ENCODE measurements at regions of chr9 and their contacts with region 1.

Region 1: DNA sequence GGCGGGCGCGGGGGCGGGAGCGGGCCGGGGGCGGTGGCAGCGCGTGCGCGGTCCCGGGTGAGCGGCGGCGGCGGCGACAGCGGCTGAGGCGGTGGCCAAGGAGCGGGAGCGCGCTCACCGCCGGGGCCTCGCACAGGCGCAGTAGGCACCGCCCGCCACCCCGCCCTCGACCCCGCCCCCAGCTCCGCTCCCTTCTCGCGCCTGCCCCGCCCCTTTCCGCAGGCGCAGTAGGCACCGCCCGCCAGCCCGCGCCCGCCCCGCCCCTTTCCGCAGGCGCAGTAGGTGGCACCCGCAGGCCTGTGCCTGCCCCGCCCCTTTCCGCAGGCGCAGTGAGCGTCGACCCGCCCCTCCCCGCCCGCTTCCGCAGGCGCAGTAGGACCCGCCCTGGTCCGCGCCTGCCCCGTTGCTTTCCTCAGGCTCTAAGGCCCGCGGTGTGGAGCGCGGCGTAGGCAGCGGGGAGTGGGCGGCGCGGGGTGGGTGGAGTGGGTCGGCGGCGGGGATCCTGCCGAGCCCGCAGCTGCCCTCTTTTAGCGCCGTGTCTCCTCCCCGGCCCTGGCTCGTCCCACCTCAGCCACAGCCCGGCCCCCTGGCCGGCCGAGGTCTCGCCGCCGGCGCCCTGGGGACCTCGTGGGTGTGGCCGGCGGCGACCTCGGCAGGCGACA is at the start of gene CAMSAP1:
- DNase-seq: peak; percentile 92
- H3K4me3 Mint-ChIP-seq: peak within 1 kb of the TSS; percentile 83
- H3K27ac Mint-ChIP-seq: peak within 1 kb of the TSS; percentile 67
- H3K4me1 Mint-ChIP-seq: peaks cover 39% of the 10 kb centered on the region
- H3K27me3 Mint-ChIP-seq: no peaks in the 10 kb centered on the region
- CTCF ChIP-seq: no peak
- total RNA-seq, gene CAMSAP1: 31.0 and 39.5 TPM in 2 replicates

Region 2: GRCh38 chr9:135757356-135757755 is 150.2 kb before region 1 on chr9:
- CTCF ChIA-PET with region 1: no interaction called
- POLR2A ChIA-PET with region 1: no interaction called
- intact Hi-C with region 1: no loop called
- DNase-seq: no peak
- H3K4me3 Mint-ChIP-seq: no peak overlapping the region
- H3K27ac Mint-ChIP-seq: no peak overlapping the region
- H3K4me1 Mint-ChIP-seq: no peaks in the 10 kb centered on the region
- H3K27me3 Mint-ChIP-seq: peaks cover 29% of the 10 kb centered on the region
- CTCF ChIP-seq: no peak

Region 3: GRCh38 chr9:135864447-135865049 is 43.0 kb before region 1 on chr9:
- CTCF ChIA-PET with region 1: interaction called, 4 read pairs
- POLR2A ChIA-PET with region 1: interaction called, 3 read pairs
- intact Hi-C with region 1: loop called (anchors 1 kb)
- DNase-seq: peak; percentile 65
- H3K4me3 Mint-ChIP-seq: no peak overlapping the region
- H3K27ac Mint-ChIP-seq: no peak overlapping the region
- H3K4me1 Mint-ChIP-seq: no peaks in the 10 kb centered on the region
- H3K27me3 Mint-ChIP-seq: no peaks in the 10 kb centered on the region
- CTCF ChIP-seq: peak; percentile 66

Region 4: DNA sequence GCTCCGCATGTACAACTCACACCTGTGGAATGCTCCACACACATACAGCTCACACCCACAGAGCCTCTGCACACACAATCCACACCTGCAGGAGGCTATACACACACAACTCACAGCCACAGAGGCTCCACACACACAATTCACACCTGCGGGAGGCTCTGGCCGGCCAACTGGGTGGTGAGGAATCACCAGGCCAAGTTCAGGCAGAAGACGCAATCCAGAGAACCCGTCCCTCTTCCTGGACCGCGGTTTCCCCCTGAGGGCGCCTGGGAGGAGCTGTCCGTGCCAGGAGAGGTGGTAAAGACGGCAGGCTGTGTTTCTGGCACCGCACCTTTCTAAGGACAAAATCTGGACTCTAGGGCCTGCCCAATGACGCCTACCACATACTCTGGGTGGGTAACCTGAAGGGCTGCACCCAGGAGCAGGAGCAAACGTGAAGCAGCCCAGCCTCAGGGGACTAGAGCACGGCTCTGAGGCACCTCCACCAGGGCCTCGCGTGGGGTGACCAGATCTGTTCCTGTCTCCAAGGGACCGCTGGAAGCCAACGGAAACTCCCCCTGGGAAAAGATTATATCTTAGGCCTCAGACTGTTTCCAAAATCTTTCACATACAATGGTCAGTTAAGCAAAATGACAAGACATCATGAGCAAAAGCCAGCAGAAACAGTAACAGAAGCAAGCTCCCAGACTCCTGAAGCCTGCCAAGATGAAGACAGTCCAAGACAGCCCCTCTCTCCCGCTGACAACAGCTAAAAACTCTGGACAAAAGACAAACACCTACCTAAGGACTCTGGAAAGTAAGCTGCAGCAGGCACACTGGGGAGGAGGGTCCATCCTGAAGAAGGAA is 17.2 kb before region 1 on chr9:
- CTCF ChIA-PET with region 1: interaction called, 5 read pairs
- POLR2A ChIA-PET with region 1: interaction called, 39 read pairs
- intact Hi-C with region 1: no loop called
- DNase-seq: peak; percentile 81
- H3K4me3 Mint-ChIP-seq: peak overlapping the region; percentile 50
- H3K27ac Mint-ChIP-seq: peak overlapping the region; percentile 72
- H3K4me1 Mint-ChIP-seq: peaks cover 69% of the 10 kb centered on the region
- H3K27me3 Mint-ChIP-seq: no peaks in the 10 kb centered on the region
- CTCF ChIP-seq: no peak

Region 5: DNA sequence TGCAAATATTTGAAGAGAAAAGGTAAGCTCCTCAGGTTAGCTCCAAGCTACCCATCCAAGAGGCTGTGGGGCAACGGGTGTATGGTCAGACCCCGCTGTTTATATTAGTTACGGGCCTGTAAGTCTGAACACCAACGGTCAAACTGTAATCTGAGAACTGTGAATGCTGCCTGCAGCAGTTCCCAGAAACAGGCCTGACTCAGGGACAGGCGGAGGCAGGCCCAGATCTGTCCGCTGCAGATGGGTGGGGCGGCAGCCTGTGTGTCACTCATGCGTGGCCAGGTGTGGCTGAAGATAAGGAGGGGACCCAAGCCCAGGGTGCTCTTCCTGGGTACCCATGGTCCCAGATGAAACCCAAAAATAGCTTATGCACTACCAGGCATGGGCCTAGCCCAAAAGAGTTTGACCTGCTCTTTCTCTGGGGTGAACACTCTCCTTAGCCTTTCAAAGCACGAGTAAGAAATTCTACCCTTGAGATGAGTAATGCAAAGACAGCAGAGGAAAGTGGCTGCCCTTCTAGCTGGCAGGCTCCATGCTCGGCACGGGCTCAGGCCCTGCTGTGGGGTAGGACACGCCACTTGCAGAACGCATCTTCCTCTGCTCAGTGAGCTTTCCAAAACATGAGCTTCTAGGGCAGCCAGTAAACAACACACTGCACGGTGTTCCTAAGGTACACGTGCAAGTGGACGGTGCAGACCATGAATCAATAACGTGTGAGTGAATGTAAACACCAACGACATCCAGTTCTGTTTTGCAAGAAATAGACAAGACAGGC is 44.5 kb after region 1 on chr9:
- CTCF ChIA-PET with region 1: no interaction called
- POLR2A ChIA-PET with region 1: interaction called, 24 read pairs
- intact Hi-C with region 1: loop called (anchors 2 kb)
- DNase-seq: peak; percentile 95
- H3K4me3 Mint-ChIP-seq: peak overlapping the region; percentile 38
- H3K27ac Mint-ChIP-seq: peak overlapping the region; percentile 80
- H3K4me1 Mint-ChIP-seq: peaks cover 32% of the 10 kb centered on the region
- H3K27me3 Mint-ChIP-seq: no peaks in the 10 kb centered on the region
- CTCF ChIP-seq: no peak

Region 6: DNA sequence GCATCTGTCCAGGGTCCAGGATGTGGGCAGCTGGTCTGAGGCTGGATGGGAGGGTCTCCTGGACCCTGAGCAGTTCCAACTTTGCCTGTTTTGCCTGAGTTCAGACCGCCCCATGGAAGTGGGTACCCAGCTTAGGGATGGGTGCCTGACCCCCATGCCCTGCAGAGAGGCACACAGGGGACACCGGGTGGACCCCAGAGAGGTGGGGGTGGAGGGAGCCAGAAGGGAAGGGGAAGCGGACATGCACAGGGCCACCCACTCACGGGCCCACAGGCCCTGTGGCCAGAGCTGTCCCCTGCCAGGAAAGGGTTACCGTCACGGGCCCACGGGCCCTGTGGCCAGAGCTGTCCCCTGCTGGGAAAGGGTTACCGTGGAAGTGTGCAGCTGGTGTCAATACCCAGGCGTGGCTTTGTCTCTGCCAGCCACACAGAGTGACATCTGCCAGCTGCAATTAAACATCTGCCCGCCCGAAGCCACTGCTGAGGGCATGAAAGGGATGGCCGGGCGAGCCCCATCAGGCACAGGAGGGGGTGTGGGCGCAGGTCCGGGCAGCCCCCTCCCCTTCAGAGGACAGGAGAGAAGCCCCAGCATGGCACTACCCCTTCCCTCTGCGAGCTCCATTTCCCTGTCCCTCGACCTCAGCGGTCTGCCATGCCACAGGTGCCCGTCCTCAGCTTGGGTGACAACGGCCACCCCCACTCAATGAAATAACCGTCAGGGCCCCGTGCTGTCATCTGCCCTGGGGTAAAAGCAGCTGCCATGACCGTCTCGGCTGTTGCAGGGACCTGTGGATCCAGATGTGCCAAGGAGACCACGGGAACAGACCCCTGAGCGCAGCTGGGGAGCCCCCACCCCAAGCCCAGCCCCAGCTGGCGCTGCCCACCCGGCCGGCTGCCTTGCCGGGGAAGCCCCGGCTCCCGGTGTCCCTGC is 137.7 kb after region 1 on chr9:
- CTCF ChIA-PET with region 1: no interaction called
- POLR2A ChIA-PET with region 1: no interaction called
- intact Hi-C with region 1: no loop called
- DNase-seq: no peak
- H3K4me3 Mint-ChIP-seq: no peak overlapping the region
- H3K27ac Mint-ChIP-seq: no peak overlapping the region
- H3K4me1 Mint-ChIP-seq: no peaks in the 10 kb centered on the region
- H3K27me3 Mint-ChIP-seq: no peaks in the 10 kb centered on the region
- CTCF ChIP-seq: no peak